ENCODE measurements at regions of chr17 and their contacts with region 1.

Region 1: DNA sequence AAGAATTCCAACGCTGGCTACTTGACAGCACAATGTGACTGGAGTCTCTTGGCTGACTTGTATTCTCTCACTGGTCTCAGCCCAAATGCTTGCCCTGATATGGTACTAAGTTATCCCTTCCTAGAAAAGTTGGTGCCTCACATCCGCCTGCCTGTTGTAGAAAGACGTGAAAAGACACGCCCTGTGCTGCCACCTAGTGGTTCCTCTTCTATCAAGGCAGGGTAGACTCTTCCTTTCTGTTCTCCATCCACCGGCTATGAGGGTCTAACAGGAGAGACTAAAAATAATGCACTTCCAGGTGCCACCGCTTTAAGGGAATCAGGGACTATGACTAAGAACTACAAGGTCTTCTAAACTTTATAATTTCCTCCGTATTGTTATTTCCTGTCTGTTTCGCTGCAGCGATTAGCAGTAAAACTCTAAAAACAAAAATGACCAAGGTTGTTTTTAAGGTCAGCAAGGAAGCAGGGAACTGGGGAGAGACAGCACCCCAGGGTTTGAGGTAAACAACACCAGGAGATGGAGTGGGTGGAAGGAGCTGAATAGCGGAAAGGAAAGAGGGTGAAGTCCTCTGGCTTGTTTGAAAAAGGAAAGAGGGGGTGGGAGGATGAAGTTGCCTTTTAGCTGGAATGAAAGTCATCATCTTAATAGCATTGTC is 109.5 kb downstream of the YPEL2 start:
- DNase-seq: peak; percentile 89 to 97 (median 92)
- H3K4me3 ChIP-seq: peak overlapping the region in 1 of 3 donors; percentile 13
- H3K27ac ChIP-seq: peak overlapping the region; percentile 15 to 68
- H3K4me1 ChIP-seq: peaks cover 6 to 18% (median 9%) of the 10 kb centered on the region in 3 donors
- H3K27me3 ChIP-seq: no peaks in the 10 kb centered on the region
- CTCF ChIP-seq: peak; percentile 81

Region 2: GRCh38 chr17:59244081-59244480 is 196.8 kb before region 1 on chr17:
- intact Hi-C with region 1: no loop called
- DNase-seq: no peak
- H3K4me3 ChIP-seq: no peak overlapping the region
- H3K27ac ChIP-seq: no peak overlapping the region
- H3K4me1 ChIP-seq: no peaks in the 10 kb centered on the region
- H3K27me3 ChIP-seq: no peaks in the 10 kb centered on the region
- CTCF ChIP-seq: no peak

Region 3: DNA sequence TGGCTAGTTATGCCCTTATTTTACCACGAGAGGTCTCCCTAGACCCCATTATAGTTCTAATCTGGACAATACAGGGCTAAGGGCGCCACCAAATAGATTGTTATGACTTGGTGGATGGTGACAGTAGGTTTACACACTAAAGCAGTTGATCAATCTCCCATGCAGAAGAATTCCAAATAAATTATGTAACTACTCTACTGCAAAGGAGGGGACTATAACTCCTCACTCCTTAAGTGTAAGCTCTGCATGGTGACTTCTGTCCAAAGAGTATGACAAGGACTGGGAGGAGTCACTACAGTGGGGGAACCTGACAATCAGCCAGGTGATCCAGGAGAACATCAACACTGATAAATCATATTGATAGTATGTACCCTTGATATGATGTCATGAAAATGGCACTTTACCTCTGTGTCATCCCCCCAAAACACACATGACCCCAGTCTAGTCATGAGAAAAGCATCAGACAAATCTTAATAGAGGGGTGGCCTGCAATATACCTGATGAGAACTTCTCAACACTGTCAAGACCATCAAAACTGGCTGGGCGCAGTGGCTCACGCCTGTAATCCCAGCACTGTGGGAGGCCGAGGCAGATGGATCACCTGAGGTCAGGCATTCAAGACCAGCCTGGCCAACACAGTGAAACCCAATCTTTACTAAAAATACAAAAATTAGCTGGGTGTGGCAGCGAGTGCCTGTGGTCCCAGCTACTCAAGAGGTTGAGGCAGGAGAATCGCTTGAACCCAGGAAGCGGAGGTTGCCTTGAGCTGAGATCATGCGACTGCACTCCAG is 129.6 kb before region 1 on chr17:
- intact Hi-C with region 1: loop called (anchors 10 kb)
- DNase-seq: peak in 3 of 5 donors; percentile 46 to 87 (median 84)
- H3K4me3 ChIP-seq: no peak overlapping the region
- H3K27ac ChIP-seq: no peak overlapping the region
- H3K4me1 ChIP-seq: no peaks in the 10 kb centered on the region
- H3K27me3 ChIP-seq: no peaks in the 10 kb centered on the region
- CTCF ChIP-seq: peak; percentile 90

Measured in kidney (tissue), 22 donors.